ENCODE measurements at regions of chr2 and their contacts with region 1.

Region 1: DNA sequence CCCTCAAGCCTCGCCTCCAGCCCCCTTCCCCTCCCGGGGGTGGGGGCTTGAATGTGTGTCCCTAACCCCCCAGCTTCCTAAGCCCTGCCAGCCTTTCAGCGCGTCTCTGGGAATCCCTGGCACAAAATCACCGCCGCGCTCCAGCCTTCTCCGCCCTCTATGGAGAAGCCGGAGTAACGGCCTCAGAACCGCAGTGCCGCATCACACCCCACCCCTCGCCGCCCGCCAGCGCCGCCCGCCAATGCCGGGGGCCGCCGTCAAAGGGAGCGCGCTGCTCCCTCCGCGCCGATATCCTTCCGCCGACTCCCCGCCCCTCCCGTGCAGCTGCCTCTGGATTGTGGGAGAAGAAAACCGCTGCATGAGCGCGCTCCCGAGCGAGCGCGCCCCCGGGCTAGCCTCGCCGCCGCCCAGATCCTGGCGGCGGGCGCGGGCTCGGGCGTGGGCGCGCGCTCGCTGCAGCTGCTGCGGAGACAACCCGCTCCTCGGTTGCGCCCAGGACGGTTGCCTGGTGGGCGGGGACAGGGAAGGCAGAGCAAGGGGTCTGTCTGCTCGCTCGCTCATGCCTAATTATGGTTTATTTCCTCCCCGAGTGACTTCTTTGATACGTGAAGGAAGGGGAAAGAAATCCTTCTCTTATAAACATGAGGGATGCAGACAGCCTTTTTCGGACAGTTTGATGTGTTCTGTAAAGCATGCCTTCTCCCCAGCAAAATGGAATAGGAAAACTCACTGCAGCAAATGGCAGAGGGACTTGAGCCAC is at the start of gene CCDC88A:
- DNase-seq: peak; percentile 97
- H3K4me3 ChIP-seq: peak within 1 kb of the TSS; percentile 70 to 98 (median 71)
- H3K27ac ChIP-seq: peak within 1 kb of the TSS; percentile 63
- H3K4me1 ChIP-seq: peaks cover 15% of the 10 kb centered on the region
- H3K27me3 ChIP-seq: no peaks in the 10 kb centered on the region
- CTCF ChIP-seq: no peak
- total RNA-seq, gene CCDC88A: 43.7 to 62.1 TPM

Region 2: GRCh38 chr2:55232084-55232862 is 187.6 kb before region 1 on chr2 and contains the starts of genes CLHC1 and RPS27A:
- CTCF ChIA-PET with region 1: no interaction called
- dilution Hi-C with region 1: no loop called
- in situ Hi-C with region 1: no loop called
- intact Hi-C with region 1: loop called (anchors 2 kb)
- DNase-seq: peak; percentile 95
- H3K4me3 ChIP-seq: peak within 1 kb of the TSS; percentile 63 to 99 (median 98)
- H3K27ac ChIP-seq: peak within 1 kb of the TSS; percentile 96
- H3K4me1 ChIP-seq: peaks cover 27% of the 10 kb centered on the region
- H3K27me3 ChIP-seq: no peaks in the 10 kb centered on the region
- CTCF ChIP-seq: no peak
- total RNA-seq, gene CLHC1: 7.7 to 17.1 TPM
- total RNA-seq, gene RPS27A: 572 to 897 TPM

Region 3: GRCh38 chr2:55268907-55269644 is 150.8 kb before region 1 on chr2 and contains the start of gene MTIF2:
- CTCF ChIA-PET with region 1: no interaction called
- dilution Hi-C with region 1: no loop called
- in situ Hi-C with region 1: no loop called
- intact Hi-C with region 1: loop called (anchors 1 kb)
- DNase-seq: peak; percentile 92
- H3K4me3 ChIP-seq: peak within 1 kb of the TSS; percentile 60 to 98 (median 61)
- H3K27ac ChIP-seq: peak within 1 kb of the TSS; percentile 78
- H3K4me1 ChIP-seq: peaks cover 5% of the 10 kb centered on the region
- H3K27me3 ChIP-seq: no peaks in the 10 kb centered on the region
- CTCF ChIP-seq: peak in 1 of 2 donors; percentile 18
- total RNA-seq, gene MTIF2: 24.0 to 39.5 TPM

Region 4: DNA sequence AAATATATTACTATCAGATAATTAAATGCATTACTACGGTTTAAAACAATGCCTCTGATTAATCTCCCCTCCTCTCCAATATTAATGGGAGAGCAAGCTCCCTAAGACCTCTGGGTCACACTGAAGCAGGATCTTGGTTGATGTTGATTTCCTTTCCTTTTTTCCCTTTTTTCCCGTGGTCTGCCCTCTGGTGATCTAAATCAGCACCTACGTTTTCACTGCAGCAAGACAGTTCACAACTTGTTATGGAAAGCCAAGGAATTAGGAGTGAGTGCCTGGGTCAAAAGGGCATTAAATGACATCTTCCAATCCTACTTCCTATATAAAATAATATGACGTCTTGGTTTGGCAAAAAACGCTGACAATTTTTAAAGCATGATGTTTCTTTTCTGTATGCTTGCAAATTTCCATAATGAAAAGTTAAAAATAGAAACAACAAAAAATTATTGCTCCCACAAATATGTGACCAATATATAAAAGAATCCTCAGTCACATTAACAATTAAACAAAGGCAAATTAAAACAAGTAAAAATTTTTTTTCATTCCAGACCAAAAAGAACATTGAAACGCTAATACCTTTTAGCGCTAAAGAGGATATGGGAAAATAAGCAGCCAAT is 91.8 kb after region 1 on chr2:
- CTCF ChIA-PET with region 1: no interaction called
- dilution Hi-C with region 1: no loop called
- in situ Hi-C with region 1: no loop called
- intact Hi-C with region 1: loop called (anchors 2 kb)
- DNase-seq: peak; percentile 46
- H3K4me3 ChIP-seq: no peak overlapping the region
- H3K27ac ChIP-seq: no peak overlapping the region
- H3K4me1 ChIP-seq: no peaks in the 10 kb centered on the region
- H3K27me3 ChIP-seq: no peaks in the 10 kb centered on the region
- CTCF ChIP-seq: peak; percentile 47 to 58

Region 5: GRCh38 chr2:55519938-55520885 is 100.4 kb after region 1 on chr2:
- CTCF ChIA-PET with region 1: no interaction called
- dilution Hi-C with region 1: no loop called
- in situ Hi-C with region 1: no loop called
- intact Hi-C with region 1: loop called (anchors 2 kb)
- DNase-seq: peak; percentile 46
- H3K4me3 ChIP-seq: peak overlapping the region; percentile 83 to 94 (median 85)
- H3K27ac ChIP-seq: peak overlapping the region; percentile 86
- H3K4me1 ChIP-seq: peaks cover 7% of the 10 kb centered on the region
- H3K27me3 ChIP-seq: no peaks in the 10 kb centered on the region
- CTCF ChIP-seq: no peak

Region 6: DNA sequence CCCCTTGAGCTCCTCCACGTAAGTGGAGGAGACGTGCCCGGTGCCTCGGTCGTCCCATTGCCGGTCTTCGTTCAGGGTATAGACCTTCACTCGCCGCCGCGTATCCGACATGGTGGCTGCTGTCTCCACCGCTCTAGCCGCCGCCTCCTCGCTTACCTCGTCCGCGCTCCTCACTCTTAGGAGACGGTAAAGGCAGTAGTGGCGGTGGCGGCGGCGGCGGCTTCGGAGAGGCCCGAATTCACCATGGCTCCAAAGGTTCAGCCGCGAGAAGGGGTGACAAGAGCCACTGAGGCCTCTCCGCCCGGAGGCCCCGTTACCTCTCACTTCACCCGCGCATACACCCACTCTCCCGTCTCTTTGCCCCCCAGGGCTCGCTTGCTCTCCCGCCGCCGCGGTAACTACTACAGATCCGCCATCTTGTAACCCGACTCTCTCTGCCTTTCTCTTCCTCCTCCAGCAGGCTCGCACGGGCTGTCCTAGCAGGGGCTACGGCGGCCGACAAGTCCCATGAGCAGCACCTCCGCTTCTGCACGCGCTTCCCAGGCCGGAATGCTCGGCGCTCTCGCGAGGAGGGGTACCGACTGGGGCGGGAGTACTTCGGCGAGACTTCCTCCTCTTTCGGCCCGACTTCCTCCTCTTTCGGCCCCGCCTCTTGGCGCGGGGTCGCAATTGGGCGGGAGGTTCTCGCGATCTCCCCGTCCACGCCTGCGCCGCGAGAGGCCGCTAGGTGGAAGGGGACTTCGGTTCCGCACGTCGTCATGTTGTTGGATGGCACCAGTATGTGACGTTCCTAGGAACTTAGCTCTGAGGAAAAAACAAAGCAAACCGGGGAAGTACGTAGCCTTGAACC is 197.5 kb after region 1 on chr2 and contains the start of gene PPP4R3B:
- CTCF ChIA-PET with region 1: no interaction called
- dilution Hi-C with region 1: no loop called
- in situ Hi-C with region 1: no loop called
- intact Hi-C with region 1: loop called (anchors 2 kb)
- DNase-seq: peak; percentile 100
- H3K4me3 ChIP-seq: peak within 1 kb of the TSS; percentile 86 to 96 (median 91)
- H3K27ac ChIP-seq: peak within 1 kb of the TSS; percentile 96
- H3K4me1 ChIP-seq: peaks cover 15% of the 10 kb centered on the region
- H3K27me3 ChIP-seq: no peaks in the 10 kb centered on the region
- CTCF ChIP-seq: peak; percentile 17 to 45
- total RNA-seq, gene PPP4R3B: 44.2 to 45.0 TPM